ENCODE measurements at regions of chrX and their contacts with region 1.

Region 1: DNA sequence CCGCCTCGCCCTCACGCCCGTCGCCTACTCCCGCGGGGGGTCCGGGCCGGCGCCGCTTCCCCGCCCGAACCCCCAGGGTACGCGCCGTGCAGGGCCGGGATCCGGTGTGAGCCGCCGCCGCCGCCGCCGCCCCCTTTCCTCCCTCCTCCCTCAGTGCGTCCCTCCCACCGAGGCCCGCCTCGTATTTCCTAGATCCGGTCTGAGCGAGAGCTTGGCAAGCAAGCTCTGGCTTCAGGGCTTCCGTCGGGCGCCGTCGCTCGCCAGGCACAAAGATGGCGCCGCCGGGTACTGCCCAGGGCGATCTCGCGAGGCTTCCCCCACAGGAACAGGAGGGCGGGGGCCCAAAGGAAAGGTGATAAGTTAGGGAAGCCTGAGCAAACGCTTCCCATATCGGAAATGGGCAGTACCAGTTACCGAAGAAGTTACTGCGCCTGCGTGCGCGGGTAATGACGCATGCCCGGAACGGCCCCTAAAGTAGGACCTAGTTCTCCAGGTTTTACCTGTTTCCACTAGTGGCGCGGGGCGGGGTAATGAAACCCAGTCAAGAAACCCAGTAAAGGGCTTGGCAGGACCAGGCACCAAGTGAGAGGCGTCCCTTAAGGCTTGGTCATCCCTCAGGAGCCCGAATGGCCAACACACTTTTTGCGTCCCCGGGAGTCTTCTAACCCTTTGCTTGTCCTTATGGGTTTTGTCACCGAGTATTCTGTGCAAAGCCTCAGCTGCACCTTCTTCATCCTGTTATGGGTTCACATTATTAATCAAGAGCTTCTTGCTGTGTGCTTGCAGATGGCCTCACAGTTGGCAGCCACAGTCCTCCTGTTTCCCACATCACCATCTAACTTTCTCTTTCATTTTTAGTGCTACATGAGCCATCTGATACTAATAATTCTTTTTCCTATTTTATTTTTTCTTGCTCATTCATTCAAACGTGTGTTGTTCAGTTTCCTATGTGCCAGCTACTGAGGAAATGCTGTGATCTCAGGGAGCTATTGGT is at the start of gene TAB3:
- DNase-seq: peak; percentile 95
- ATAC-seq: peak; percentile 92
- H3K4me3 ChIP-seq: peak within 1 kb of the TSS; percentile 46 to 80 (median 71)
- H3K4me3 Mint-ChIP-seq: peak within 1 kb of the TSS; percentile 95
- H3K27ac ChIP-seq: peak within 1 kb of the TSS; percentile 57 to 76
- H3K27ac Mint-ChIP-seq: peak within 1 kb of the TSS; percentile 95
- H3K4me1 ChIP-seq: peaks cover 0 to 10% of the 10 kb centered on the region in 2 donors
- H3K4me1 Mint-ChIP-seq: peaks cover 30% of the 10 kb centered on the region
- H3K27me3 ChIP-seq: no peaks in the 10 kb centered on the region
- H3K27me3 Mint-ChIP-seq: no peaks in the 10 kb centered on the region
- CTCF ChIP-seq: no peak
- total RNA-seq, gene TAB3: 24.4 and 26.5 TPM in 2 replicates

Region 2: DNA sequence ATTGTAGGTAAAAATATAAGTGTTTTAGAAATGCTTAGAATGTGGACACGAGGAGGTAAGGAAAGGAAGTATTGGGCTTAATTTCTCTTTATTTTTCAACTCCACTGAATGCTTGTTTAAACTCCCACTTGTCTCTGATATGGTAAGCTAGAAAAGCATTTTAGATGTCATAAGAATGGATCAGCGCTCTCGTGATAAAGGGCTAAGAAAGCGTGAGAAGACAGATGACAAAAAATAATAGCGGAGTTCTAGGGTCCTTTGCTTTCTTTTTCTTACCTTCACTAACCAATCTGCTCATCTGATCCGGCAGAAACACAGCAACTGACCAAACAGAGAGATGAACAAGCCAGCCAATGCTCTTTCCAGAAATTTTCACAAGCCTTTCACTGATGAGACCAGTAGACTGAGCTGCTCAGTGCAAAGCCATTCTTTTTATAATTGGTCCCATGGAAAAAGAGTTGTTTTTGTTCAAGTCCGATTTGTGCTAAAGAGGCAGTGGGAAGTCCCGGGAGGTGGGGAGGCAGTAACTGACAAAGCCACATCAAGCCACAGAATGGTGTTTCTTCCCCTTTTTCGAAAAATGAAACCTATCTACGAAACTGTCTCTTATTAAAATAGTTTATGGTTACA is 312.0 kb before region 1 on chrX and contains the start of gene TASL:
- CTCF ChIA-PET with region 1: no interaction called
- POLR2A ChIA-PET with region 1: no interaction called
- intact Hi-C with region 1: loop called (anchors 5 kb)
- DNase-seq: peak; percentile 81
- ATAC-seq: peak; percentile 85
- H3K4me3 ChIP-seq: peak within 1 kb of the TSS; percentile 55 to 96 (median 76)
- H3K4me3 Mint-ChIP-seq: peak within 1 kb of the TSS; percentile 99
- H3K27ac ChIP-seq: peak within 1 kb of the TSS; percentile 85 to 95
- H3K27ac Mint-ChIP-seq: peak within 1 kb of the TSS; percentile 99
- H3K4me1 ChIP-seq: peaks cover 20% of the 10 kb centered on the region in 2 donors
- H3K4me1 Mint-ChIP-seq: peaks cover 27% of the 10 kb centered on the region
- H3K27me3 ChIP-seq: no peaks in the 10 kb centered on the region
- H3K27me3 Mint-ChIP-seq: no peaks in the 10 kb centered on the region
- CTCF ChIP-seq: no peak
- total RNA-seq, gene TASL: 25.4 and 27.0 TPM in 2 replicates

Region 3: DNA sequence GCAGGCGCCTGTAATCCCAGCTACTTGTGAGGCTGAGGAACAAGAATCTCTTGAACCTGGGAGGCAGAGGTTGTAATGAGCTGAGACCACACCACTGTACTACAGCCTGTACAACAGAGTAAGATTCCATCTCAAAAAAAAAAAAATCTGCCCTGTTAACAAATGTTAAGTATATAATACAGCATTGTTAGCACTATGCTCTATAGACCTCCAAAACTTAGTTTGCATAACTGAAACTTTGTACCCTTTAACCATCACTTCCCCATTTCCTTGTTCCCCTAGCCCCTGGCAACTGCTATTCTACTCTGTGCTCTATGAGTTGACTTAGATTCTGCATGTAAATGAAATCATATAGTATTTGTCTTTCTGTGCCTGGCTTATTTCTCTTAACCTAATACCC is 77.1 kb before region 1 on chrX:
- CTCF ChIA-PET with region 1: no interaction called
- POLR2A ChIA-PET with region 1: no interaction called
- intact Hi-C with region 1: loop called (anchors 10 kb)
- DNase-seq: peak; percentile 35
- ATAC-seq: peak; percentile 90
- H3K4me3 ChIP-seq: no peak overlapping the region
- H3K4me3 Mint-ChIP-seq: peak overlapping the region; percentile 59
- H3K27ac ChIP-seq: no peak overlapping the region
- H3K27ac Mint-ChIP-seq: peak overlapping the region; percentile 18
- H3K4me1 ChIP-seq: peaks cover 18 to 25% of the 10 kb centered on the region in 2 donors
- H3K4me1 Mint-ChIP-seq: peaks cover 28% of the 10 kb centered on the region
- H3K27me3 ChIP-seq: no peaks in the 10 kb centered on the region
- H3K27me3 Mint-ChIP-seq: no peaks in the 10 kb centered on the region
- CTCF ChIP-seq: no peak

Region 4: DNA sequence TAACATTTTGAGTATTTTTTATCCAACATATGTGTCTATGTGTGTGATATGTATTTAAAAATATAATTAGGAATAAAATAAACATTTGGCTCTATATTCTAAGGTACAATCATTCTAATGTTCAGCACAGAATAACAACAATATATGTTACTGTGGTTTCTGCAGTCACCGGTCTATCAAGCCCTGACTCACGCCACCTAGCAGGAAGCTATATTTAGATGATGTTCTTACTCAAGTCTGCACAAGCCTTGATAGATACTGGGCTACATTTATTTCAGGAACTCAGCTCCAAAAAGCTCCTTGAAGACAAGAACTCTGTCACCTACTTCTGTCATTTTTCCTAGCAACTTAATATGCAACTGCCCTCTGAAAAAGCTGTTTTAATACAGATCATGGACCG is 334.4 kb after region 1 on chrX:
- CTCF ChIA-PET with region 1: no interaction called
- POLR2A ChIA-PET with region 1: no interaction called
- intact Hi-C with region 1: loop called (anchors 10 kb)
- DNase-seq: no peak
- ATAC-seq: peak; percentile 77
- H3K4me3 ChIP-seq: no peak overlapping the region
- H3K4me3 Mint-ChIP-seq: peak overlapping the region; percentile 74
- H3K27ac ChIP-seq: no peak overlapping the region
- H3K27ac Mint-ChIP-seq: peak overlapping the region; percentile 66
- H3K4me1 ChIP-seq: peaks cover 10 to 13% of the 10 kb centered on the region in 2 donors
- H3K4me1 Mint-ChIP-seq: peaks cover 24% of the 10 kb centered on the region
- H3K27me3 ChIP-seq: no peaks in the 10 kb centered on the region
- H3K27me3 Mint-ChIP-seq: no peaks in the 10 kb centered on the region
- CTCF ChIP-seq: no peak